Activated T-helper 2 cell treated with anti-CD3 and anti-CD28 coated beads, Interferon-gamma antibody, Interleukin-2, Interleukin-4, amounts not matched to agents 10 μg/mL and 5 μg/mL and 100 μg/mL, durations not matched to agents 14 hours and 24 hours and 36 hours (primary cell): ENCODE measurements at regions of chr4 and their contacts with region 1.

Region 1: DNA sequence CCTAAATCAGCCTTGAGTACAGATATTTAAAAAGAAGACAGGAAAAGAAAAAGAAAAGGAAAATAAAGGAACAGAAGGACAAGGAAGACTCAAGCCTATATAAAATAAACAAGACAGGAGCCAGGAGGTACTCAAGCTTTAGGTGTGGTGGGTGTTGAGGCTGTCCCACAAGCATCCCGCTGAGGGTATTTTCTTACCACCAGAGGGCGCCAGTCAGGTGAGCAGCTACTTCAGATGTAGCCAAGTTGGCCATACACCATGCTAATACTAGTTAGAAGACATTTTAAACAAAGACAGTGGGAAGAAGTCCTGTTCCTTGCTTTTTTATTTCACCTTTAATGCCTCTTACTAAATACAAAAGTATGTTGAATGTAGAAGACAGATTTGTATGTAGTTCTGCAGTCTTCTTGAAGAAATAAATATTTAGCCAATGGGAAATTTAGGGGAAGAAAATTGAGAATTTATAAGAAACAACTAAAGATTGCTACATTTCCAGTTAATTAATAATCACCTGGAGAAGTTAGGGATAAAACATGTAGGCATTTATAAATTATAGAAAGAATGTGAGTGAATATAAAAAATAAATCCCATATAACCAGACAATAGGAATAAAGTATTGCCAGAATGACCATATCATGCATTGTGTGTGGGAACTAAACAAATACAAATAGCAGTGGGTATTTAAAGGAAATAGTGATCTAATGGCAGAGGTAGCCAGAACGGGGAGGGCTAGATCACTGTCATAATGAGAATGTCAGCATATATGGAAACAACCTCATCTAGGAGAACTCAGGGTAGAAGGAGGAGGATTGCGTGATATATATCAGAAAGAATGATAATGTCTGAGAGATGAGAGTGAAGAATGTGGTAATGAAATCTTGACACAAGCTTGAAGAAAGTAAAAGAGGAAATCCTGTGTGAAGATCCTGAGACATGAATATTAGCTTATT is 71.0 kb downstream of the MTHFD2L start:
- DNase-seq: peak; percentile 63
- H3K4me3 Mint-ChIP-seq: no peak overlapping the region
- H3K27ac Mint-ChIP-seq: no peak overlapping the region
- H3K4me1 Mint-ChIP-seq: peaks cover 22% of the 10 kb centered on the region
- H3K27me3 Mint-ChIP-seq: no peaks in the 10 kb centered on the region

Region 2: GRCh38 chr4:74189331-74190043 is 39.5 kb before region 1 on chr4:
- intact Hi-C with region 1: loop called (anchors 5 kb)
- DNase-seq: no peak
- H3K4me3 Mint-ChIP-seq: no peak overlapping the region
- H3K27ac Mint-ChIP-seq: no peak overlapping the region
- H3K4me1 Mint-ChIP-seq: no peaks in the 10 kb centered on the region
- H3K27me3 Mint-ChIP-seq: peaks cover 7% of the 10 kb centered on the region

Region 3: DNA sequence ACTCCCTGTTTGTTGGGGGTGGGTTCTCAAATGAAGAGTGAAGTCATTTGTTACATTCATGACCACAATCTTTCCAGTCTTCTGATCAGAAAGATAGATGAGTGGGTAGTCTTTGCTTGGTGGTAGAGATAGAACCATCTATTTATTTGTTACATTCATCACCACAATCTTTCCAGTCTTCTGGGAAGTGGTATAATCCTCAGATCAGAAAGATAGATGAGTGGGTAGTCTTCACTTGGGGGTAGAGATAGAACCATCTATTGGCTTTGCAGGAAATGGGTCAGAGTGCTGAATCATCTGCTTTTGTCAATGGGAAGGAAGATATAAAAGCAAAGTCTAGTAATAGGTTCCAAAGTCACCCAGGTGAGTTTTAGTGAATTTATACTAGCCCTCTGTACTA is 15.1 kb after region 1 on chr4:
- intact Hi-C with region 1: loop called (anchors 2 kb)
- DNase-seq: no peak
- H3K4me3 Mint-ChIP-seq: no peak overlapping the region
- H3K27ac Mint-ChIP-seq: peak overlapping the region; percentile 31
- H3K4me1 Mint-ChIP-seq: peaks cover 13% of the 10 kb centered on the region
- H3K27me3 Mint-ChIP-seq: no peaks in the 10 kb centered on the region

Region 4: DNA sequence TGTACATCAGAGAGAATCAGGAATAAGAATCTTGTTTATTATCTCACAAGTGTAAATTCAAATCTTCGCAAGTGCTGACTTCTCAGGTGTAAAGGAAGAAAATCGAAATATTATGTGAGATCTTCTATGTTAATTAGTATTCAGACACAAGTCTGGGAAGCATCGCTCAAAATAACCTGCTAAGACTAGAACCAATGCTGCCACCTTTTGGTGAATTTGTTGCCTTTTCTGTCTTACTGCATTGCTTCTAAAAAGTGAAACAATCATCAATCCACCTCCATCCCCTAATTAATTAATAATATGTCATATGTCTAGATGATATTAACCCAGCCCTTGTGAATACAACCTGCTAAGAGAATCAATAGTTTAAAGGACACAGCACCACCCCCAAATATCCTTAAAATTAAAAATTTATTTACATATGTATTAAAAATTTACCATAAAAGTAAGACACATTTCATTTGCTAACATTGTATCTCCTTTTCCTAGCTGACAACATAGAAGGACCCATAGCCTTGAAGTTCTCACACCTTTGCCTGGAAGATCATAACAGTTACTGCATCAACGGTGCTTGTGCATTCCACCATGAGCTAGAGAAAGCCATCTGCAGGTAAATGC is 82.8 kb after region 1 on chr4:
- intact Hi-C with region 1: loop called (anchors 1 kb)
- DNase-seq: no peak
- H3K4me3 Mint-ChIP-seq: no peak overlapping the region
- H3K27ac Mint-ChIP-seq: no peak overlapping the region
- H3K4me1 Mint-ChIP-seq: peaks cover 21% of the 10 kb centered on the region
- H3K27me3 Mint-ChIP-seq: peaks cover 3% of the 10 kb centered on the region

Region 5: GRCh38 chr4:74623041-74623440 is 394.1 kb after region 1 on chr4:
- intact Hi-C with region 1: loop called (anchors 5 kb)
- DNase-seq: no peak
- H3K4me3 Mint-ChIP-seq: no peak overlapping the region
- H3K27ac Mint-ChIP-seq: no peak overlapping the region
- H3K4me1 Mint-ChIP-seq: peaks cover 26% of the 10 kb centered on the region
- H3K27me3 Mint-ChIP-seq: peaks cover 2% of the 10 kb centered on the region

Region 6: DNA sequence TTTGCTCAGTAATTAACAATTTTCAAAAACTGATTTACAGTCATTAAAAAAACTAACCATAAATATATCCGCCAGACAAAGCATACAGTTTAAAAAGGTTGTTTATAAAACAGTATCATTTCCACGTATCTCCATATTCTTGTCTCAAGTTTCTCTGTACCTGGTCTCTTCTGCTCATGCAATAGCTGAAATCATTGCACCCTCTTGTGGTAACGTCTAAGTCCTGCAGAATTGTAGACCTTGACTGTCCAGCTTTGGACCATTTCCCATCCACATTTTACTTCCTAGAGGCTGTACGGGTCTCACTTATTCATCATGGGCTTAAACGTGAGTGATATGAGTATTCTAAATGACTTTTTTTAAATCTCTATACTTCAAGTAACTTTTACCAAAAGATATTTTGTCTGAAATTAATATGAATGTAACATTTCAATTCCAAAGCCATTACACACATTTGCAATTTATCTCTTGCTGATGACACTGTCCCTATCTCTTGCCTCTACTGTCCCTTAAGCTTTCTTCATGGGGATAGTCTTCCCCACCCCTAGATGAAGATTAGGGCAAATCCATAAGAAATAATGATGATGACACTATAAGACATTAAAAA is 446.8 kb after region 1 on chr4:
- intact Hi-C with region 1: loop called (anchors 5 kb)
- DNase-seq: no peak
- H3K4me3 Mint-ChIP-seq: no peak overlapping the region
- H3K27ac Mint-ChIP-seq: no peak overlapping the region
- H3K4me1 Mint-ChIP-seq: peaks cover 2% of the 10 kb centered on the region
- H3K27me3 Mint-ChIP-seq: peaks cover 6% of the 10 kb centered on the region